Endothelial cell of umbilical vein (primary cell): ENCODE measurements at regions of chr10 and their contacts with region 1.

Region 1: DNA sequence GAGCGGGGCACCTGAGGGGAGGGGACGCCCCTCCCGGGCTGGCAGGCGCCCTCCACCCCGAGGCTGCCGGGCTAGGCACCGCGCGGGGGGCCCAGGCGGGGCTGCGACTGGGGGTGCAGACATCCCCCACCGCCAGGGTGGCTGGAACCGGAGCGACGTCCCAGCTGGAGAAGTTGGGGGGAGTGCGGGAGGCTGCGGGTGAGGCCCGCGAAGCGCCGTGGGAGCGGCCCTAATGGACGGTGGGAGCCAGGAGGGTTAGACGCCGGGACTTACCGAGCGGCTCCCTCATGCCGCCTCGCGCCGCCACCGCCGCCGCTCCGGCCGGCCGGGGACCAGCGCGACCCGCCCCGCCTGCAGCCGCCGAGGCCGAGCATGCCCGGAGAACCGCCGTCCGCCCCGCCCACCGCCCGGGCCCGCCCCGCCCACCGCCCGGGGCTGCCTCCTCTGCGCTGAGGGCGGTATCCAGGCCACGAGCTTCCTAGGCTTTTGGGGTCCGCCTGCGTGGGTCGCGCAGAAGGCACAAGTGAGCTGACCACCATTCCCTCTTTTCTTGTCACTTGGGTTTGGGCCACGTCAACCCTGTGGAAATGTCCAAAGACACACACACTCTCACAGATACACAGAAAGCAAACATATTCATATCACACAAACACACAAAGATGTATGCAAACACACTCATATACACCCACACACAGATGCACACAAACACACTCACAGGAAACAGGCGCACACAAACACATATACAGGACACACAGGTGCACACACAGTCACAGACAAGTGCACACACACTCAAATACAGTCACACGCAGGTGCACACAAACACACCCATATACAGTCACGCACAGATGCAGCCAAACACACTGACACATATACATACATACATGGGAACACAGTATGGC is at the start of gene JCAD:
- DNase-seq: peak; percentile 69
- H3K4me3 ChIP-seq: peak within 1 kb of the TSS; percentile 62 to 69 (median 68)
- H3K27ac ChIP-seq: peak within 1 kb of the TSS; percentile 69
- H3K4me1 ChIP-seq: peaks cover 59% of the 10 kb centered on the region
- H3K27me3 ChIP-seq: no peaks in the 10 kb centered on the region
- CTCF ChIP-seq: no peak
- POLR2A ChIP-seq: peak; percentile 55
- total RNA-seq, gene JCAD: 76.3 and 79.7 TPM in 2 replicates

Region 2: GRCh38 chr10:29621161-29621560 is 438.3 kb before region 1 on chr10:
- CTCF ChIA-PET with region 1: no interaction called
- POLR2A ChIA-PET with region 1: no interaction called
- dilution Hi-C with region 1: no loop called
- intact Hi-C with region 1: no loop called
- DNase-seq: no peak
- H3K4me3 ChIP-seq: no peak overlapping the region
- H3K27ac ChIP-seq: no peak overlapping the region
- H3K4me1 ChIP-seq: no peaks in the 10 kb centered on the region
- H3K27me3 ChIP-seq: no peaks in the 10 kb centered on the region
- CTCF ChIP-seq: no peak
- POLR2A ChIP-seq: no peak

Region 3: DNA sequence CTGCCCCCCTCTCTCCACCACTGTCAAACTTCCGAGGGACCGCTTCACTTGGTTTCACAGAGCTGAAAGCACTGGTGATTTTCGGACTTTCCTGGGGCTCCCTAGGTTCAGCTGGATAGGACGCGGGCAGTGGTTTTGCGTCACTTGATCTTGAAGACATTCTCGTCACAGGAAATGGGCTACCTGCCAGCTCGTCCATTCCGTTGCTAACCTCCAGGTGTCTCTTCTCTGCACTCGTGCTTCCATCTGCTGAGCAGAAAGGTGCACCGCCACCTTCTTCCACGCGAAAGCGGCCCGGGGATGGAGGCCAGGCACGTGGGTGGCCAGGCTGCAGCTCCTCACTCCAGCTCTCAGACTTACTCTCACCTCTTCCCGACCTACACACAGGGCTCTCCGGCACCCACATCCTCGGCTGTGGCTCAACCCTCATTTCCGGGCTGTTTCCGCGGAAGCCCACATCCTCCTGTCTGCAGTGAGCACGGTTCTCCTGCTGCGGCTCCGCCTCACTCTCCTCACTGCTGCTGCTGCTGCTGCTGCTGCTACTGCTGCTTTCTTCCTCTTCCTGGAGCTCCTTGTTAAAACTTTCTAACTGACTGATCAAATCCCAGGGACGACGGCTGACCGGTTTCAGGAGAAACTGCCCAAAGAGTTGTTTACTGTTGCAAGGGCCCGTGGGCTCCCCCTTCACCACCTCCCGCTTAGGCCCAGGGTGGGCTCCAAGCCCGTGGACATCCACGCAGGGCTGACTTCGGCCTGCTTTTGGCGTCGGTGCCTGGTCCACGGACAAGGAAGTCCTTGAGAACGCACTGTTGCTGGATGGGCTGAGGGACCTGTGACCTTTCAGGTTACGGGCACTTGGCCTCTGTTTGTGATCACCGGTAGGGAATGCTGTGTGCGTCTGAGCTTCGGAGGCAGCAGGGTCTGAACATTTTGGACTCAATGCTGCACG is 32.1 kb before region 1 on chr10:
- CTCF ChIA-PET with region 1: interaction called, 8 read pairs
- POLR2A ChIA-PET with region 1: interaction called, 3 read pairs
- dilution Hi-C with region 1: no loop called
- intact Hi-C with region 1: loop called (anchors 1 kb)
- DNase-seq: peak; percentile 73
- H3K4me3 ChIP-seq: no peak overlapping the region
- H3K27ac ChIP-seq: peak overlapping the region; percentile 78
- H3K4me1 ChIP-seq: peaks cover 44% of the 10 kb centered on the region
- H3K27me3 ChIP-seq: no peaks in the 10 kb centered on the region
- CTCF ChIP-seq: peak; percentile 14
- POLR2A ChIP-seq: peak; percentile 40

Region 4: DNA sequence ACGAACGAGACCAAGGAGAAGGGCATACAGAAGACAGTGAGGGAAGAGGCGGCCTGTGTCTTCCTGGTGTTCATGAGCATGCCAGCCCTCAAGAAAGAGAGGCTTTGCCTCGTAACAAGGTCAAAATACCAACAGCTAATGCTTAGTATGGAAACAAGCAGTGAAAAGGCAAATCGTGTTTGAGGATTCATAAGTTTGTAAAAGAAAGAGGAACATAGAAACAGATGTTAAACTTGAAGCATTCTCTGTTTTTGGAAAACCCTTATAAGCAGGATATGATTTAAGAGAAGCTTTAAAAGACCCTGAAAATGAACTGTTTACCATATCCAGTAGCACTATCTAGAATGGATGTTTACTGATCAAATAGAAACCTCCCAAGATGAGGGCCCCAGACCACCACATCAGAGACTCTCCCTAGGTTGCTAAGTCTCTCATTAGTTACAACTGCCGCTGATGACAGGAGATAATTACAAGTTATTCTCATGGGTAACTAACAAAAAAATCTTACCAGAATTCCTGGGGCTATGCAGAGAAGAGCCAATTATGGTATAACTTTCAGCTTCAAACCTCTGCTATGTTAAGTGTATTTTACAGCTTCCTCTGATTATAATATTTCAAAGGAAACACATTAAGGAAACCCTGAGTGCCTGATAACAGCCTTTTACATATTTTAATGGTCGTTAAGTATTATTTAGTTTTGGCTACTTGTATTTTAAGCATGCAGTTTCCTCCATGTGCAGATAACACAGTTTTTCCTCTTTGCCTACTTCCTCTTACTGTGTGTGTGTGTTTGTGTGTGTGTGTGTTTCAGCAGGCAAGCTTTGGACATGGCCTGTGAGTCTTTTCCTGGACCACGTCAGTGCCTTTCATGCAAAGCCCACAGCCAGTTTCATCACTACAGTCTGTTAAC is 18.0 kb before region 1 on chr10:
- CTCF ChIA-PET with region 1: interaction called, 7 read pairs
- POLR2A ChIA-PET with region 1: interaction called, 5 read pairs
- dilution Hi-C with region 1: no loop called
- intact Hi-C with region 1: loop called (anchors 1 kb)
- DNase-seq: peak; percentile 96
- H3K4me3 ChIP-seq: no peak overlapping the region
- H3K27ac ChIP-seq: peak overlapping the region; percentile 81
- H3K4me1 ChIP-seq: peaks cover 50% of the 10 kb centered on the region
- H3K27me3 ChIP-seq: no peaks in the 10 kb centered on the region
- CTCF ChIP-seq: no peak
- POLR2A ChIP-seq: peak; percentile 52

Region 5: GRCh38 chr10:30048768-30049517 is 10.5 kb before region 1 on chr10:
- CTCF ChIA-PET with region 1: interaction called, 4 read pairs
- POLR2A ChIA-PET with region 1: interaction called, 5 read pairs
- dilution Hi-C with region 1: no loop called
- intact Hi-C with region 1: loop called (anchors 2 kb)
- DNase-seq: peak; percentile 72
- H3K4me3 ChIP-seq: no peak overlapping the region
- H3K27ac ChIP-seq: peak overlapping the region; percentile 64
- H3K4me1 ChIP-seq: peaks cover 33% of the 10 kb centered on the region
- H3K27me3 ChIP-seq: no peaks in the 10 kb centered on the region
- CTCF ChIP-seq: no peak
- POLR2A ChIP-seq: peak; percentile 60

Region 6: GRCh38 chr10:30091136-30091535 is 31.7 kb after region 1 on chr10:
- CTCF ChIA-PET with region 1: no interaction called
- POLR2A ChIA-PET with region 1: no interaction called
- dilution Hi-C with region 1: no loop called
- intact Hi-C with region 1: no loop called
- DNase-seq: no peak
- H3K4me3 ChIP-seq: no peak overlapping the region
- H3K27ac ChIP-seq: no peak overlapping the region
- H3K4me1 ChIP-seq: no peaks in the 10 kb centered on the region
- H3K27me3 ChIP-seq: peaks cover 2 to 3% of the 10 kb centered on the region in 2 experiments
- CTCF ChIP-seq: no peak
- POLR2A ChIP-seq: no peak

Region 7: DNA sequence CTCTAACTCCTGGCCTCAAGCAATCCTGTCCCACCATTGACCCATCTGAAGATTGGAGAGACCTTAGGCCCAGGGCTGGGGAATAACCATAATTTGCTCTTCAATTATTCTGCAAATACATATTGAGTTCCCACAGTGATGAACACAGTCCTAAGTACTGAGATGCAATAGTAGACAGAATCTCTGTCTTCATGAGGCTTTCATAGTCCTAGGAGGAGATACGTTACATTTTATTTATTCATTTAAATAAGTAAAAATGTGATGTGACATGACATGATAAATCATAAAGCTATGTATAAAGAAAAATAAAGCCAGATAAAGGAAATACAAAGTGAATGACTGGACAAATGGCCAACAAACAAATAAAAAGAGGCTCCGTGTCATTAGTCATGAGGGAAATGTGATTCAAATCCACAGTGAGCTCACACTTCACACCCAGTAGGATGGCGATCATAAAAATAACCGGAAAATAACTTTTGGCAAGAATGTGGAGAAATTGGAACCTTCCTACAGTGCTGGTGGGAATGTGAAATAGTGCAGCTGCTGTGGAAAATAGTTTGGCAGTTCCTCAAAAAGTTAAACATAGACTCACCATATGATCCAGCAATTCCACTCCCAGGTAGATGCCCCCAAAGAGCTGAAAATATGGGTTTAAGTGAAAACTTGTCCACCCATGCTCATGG is 52.0 kb after region 1 on chr10:
- CTCF ChIA-PET with region 1: interaction called, 6 read pairs
- POLR2A ChIA-PET with region 1: no interaction called
- dilution Hi-C with region 1: no loop called
- intact Hi-C with region 1: loop called (anchors 2 kb)
- DNase-seq: peak; percentile 96
- H3K4me3 ChIP-seq: no peak overlapping the region
- H3K27ac ChIP-seq: peak overlapping the region; percentile 64
- H3K4me1 ChIP-seq: peaks cover 29% of the 10 kb centered on the region
- H3K27me3 ChIP-seq: no peaks in the 10 kb centered on the region
- CTCF ChIP-seq: no peak
- POLR2A ChIP-seq: no peak

Region 8: GRCh38 chr10:30935078-30935477 is 875.6 kb after region 1 on chr10:
- CTCF ChIA-PET with region 1: no interaction called
- POLR2A ChIA-PET with region 1: no interaction called
- dilution Hi-C with region 1: no loop called
- intact Hi-C with region 1: no loop called
- DNase-seq: peak; percentile 21
- H3K4me3 ChIP-seq: no peak overlapping the region
- H3K27ac ChIP-seq: no peak overlapping the region
- H3K4me1 ChIP-seq: no peaks in the 10 kb centered on the region
- H3K27me3 ChIP-seq: no peaks in the 10 kb centered on the region
- CTCF ChIP-seq: no peak
- POLR2A ChIP-seq: no peak